ENCODE measurements at regions of chr4 and their contacts with region 1.

Region 1: DNA sequence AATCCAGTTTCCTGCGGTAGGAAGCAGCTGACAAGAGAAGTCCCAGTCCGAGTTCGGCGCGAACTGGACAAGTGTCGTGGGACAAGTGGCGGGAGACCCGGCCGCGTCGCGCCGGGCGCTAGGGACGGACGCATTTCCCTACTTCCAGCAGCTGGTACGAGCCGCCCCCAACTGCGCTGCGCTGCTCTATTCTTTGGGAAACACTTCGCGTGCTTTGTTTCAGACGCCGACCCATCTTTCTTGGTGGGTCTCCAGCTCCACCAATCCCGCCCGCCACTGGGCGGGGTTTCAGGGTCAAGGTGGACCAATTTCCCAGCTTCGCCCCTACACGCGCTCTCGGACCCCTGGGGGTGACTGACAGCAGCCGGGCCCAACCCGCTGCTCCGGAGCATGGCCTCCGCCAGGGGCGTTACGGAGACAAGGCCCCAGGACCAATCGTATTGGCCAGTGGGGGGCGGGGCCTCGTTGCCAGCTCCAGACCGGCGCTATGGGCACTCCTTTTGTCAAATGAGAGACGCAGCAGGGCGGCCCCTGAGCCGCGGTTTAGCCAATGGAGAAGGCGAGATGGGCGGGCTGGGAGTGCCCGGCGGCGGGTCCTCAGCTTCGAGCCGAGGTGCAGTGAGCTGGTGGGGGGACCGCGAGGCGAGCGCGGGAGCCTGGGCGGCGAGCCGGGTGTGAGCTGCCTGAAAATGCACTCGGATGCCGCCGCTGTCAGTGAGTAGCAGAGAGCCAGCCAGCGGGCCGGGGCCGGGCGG is at the start of gene DCUN1D4:
- DNase-seq: peak; percentile 100
- H3K4me3 ChIP-seq: peak within 1 kb of the TSS; percentile 80
- H3K4me3 Mint-ChIP-seq: peak within 1 kb of the TSS; percentile 98
- H3K27ac Mint-ChIP-seq: peak within 1 kb of the TSS; percentile 95
- H3K4me1 ChIP-seq: peaks cover 3% of the 10 kb centered on the region; the same call in 1 of the 2 replicates
- H3K4me1 Mint-ChIP-seq: peaks cover 4% of the 10 kb centered on the region
- H3K27me3 ChIP-seq: no peaks in the 10 kb centered on the region
- H3K27me3 Mint-ChIP-seq: no peaks in the 10 kb centered on the region
- CTCF ChIP-seq: peak in 1 of 2 experiments; percentile 26
- total RNA-seq, gene DCUN1D4: 42.8 TPM in 2 replicates

Region 2: GRCh38 chr4:51853027-51853682 is 10.4 kb after region 1 on chr4:
- CTCF ChIA-PET with region 1: interaction called, 9 read pairs
- POLR2A ChIA-PET with region 1: interaction called, 4 read pairs
- intact Hi-C with region 1: loop called (anchors 1 kb)
- DNase-seq: peak; percentile 64 to 72
- H3K4me3 ChIP-seq: no peak overlapping the region
- H3K4me3 Mint-ChIP-seq: peak overlapping the region; percentile 67
- H3K27ac Mint-ChIP-seq: peak overlapping the region; percentile 96
- H3K4me1 ChIP-seq: peaks cover 26% of the 10 kb centered on the region
- H3K4me1 Mint-ChIP-seq: peaks cover 56% of the 10 kb centered on the region
- H3K27me3 ChIP-seq: no peaks in the 10 kb centered on the region
- H3K27me3 Mint-ChIP-seq: no peaks in the 10 kb centered on the region
- CTCF ChIP-seq: no peak

Region 3: GRCh38 chr4:51872283-51872997 is 29.7 kb after region 1 on chr4:
- CTCF ChIA-PET with region 1: interaction called, 3 read pairs
- POLR2A ChIA-PET with region 1: no interaction called
- intact Hi-C with region 1: loop called (anchors 2 kb)
- DNase-seq: no peak
- H3K4me3 ChIP-seq: no peak overlapping the region
- H3K4me3 Mint-ChIP-seq: no peak overlapping the region
- H3K27ac Mint-ChIP-seq: no peak overlapping the region
- H3K4me1 ChIP-seq: peaks cover 5% of the 10 kb centered on the region; the same call in 1 of the 2 replicates
- H3K4me1 Mint-ChIP-seq: peaks cover 10% of the 10 kb centered on the region
- H3K27me3 ChIP-seq: no peaks in the 10 kb centered on the region
- H3K27me3 Mint-ChIP-seq: no peaks in the 10 kb centered on the region
- CTCF ChIP-seq: no peak

Region 4: GRCh38 chr4:51909236-51909703 is 66.5 kb after region 1 on chr4:
- CTCF ChIA-PET with region 1: interaction called, 3 read pairs
- POLR2A ChIA-PET with region 1: no interaction called
- intact Hi-C with region 1: loop called (anchors 1 kb)
- DNase-seq: peak; percentile 83 to 85
- H3K4me3 ChIP-seq: no peak overlapping the region
- H3K4me3 Mint-ChIP-seq: peak overlapping the region; percentile 61
- H3K27ac Mint-ChIP-seq: peak overlapping the region; percentile 83
- H3K4me1 ChIP-seq: peaks cover 24% of the 10 kb centered on the region
- H3K4me1 Mint-ChIP-seq: peaks cover 20% of the 10 kb centered on the region
- H3K27me3 ChIP-seq: no peaks in the 10 kb centered on the region
- H3K27me3 Mint-ChIP-seq: no peaks in the 10 kb centered on the region
- CTCF ChIP-seq: no peak

Region 5: DNA sequence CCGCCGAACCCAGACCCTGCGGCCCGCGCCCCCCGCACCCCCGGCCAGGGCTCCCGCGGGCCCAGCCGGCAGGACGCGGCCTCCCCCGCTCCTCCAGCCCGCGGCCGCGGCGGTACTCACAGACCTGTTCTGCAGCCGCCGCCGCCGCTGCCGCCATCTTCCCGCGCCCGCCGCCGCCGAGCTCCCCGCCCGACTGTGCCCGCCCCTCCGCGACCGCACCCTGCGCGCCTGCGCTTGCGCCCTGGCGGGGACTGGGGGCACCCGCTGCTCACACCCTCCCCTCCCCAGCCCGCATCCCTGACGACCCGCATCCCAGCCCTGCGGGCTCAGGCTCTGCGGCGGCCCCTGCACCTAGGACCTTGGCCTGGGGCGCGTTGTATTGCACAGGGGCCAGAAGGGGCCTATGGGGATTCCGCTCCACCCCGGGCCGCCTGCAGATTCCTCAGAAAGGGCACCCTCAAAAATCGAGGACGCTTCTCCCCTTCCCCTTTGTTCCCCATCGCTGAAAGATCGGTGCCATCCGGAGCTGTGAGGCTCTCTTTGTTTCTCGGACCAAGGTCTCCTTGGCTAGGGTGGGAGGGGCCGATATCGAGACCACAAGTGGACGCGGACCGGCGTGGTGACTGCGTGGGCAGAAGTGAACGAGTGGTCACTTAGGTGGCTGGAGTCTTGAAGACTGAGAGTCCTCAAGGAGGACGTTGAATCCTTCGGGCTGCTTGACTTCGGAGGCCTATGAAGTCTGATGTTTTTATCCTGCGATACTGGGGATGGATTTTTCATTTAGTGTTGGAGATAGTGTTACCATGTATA is 195.6 kb after region 1 on chr4 and contains the start of gene SGCB:
- CTCF ChIA-PET with region 1: no interaction called
- POLR2A ChIA-PET with region 1: interaction called, 6 read pairs
- intact Hi-C with region 1: loop called (anchors 5 kb)
- DNase-seq: peak; percentile 40 to 65
- H3K4me3 ChIP-seq: peak within 1 kb of the TSS; percentile 71
- H3K4me3 Mint-ChIP-seq: peak within 1 kb of the TSS; percentile 76
- H3K27ac Mint-ChIP-seq: no peak within 1 kb of the TSS
- H3K4me1 ChIP-seq: peaks cover 4% of the 10 kb centered on the region; the same call in 1 of the 2 replicates
- H3K4me1 Mint-ChIP-seq: no peaks in the 10 kb centered on the region
- H3K27me3 ChIP-seq: no peaks in the 10 kb centered on the region
- H3K27me3 Mint-ChIP-seq: peaks cover 15% of the 10 kb centered on the region
- CTCF ChIP-seq: no peak
- total RNA-seq, gene SGCB: 6.5 and 7.2 TPM in 2 replicates